ENCODE measurements at regions of chr2 and their contacts with region 1.

Region 1: GRCh38 chr2:55843096-55843993 is 80.2 kb downstream of the EFEMP1 start:
- DNase-seq: peak; percentile 92
- H3K4me3 ChIP-seq: no peak overlapping the region
- H3K27ac ChIP-seq: no peak overlapping the region
- H3K4me1 ChIP-seq: peaks cover 28% of the 10 kb centered on the region
- H3K27me3 ChIP-seq: no peaks in the 10 kb centered on the region
- CTCF ChIP-seq: no peak

Region 2: DNA sequence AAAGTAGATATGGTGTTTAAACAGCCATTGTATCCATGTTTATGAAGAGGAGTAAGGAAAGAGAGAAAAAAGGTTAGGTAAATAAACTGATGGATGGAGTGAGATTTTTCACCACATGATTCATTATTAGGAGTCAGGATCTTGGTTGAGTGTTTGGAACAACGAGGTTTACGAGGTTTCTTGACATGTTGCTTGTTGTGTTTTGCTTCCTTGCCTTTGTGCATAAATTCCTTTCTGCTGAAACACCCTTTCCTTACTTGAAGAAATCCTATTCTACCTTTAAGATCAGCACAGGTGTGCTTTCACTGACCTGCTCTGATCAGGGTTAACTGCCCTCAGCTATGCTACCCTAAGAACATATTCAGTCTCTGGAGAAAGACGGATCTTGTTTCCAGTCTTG is 13.6 kb after region 1 on chr2:
- CTCF ChIA-PET with region 1: no interaction called
- dilution Hi-C with region 1: no loop called
- in situ Hi-C with region 1: no loop called
- intact Hi-C with region 1: loop called (anchors 1 kb)
- DNase-seq: peak; percentile 97
- H3K4me3 ChIP-seq: no peak overlapping the region
- H3K27ac ChIP-seq: peak overlapping the region; percentile 66
- H3K4me1 ChIP-seq: peaks cover 38% of the 10 kb centered on the region
- H3K27me3 ChIP-seq: no peaks in the 10 kb centered on the region
- CTCF ChIP-seq: no peak

Region 3: DNA sequence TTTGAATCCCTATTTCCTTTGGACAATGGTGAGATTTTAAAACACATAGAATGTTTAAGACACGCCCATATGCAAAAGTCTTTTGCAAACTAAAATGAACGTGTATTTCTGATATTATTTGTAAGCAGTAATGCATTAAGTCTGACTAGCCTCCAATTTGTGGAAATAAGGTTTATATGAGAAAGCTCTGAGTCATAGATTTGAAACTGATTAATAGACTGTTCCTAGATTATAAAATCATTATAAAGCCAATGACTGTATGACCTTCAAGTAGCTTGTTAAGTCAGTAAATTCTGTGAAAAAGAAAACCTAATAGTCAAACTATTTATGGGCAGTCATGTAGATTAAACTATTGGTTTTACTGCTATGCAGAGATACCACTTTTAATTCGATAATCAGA is 93.0 kb after region 1 on chr2:
- CTCF ChIA-PET with region 1: no interaction called
- dilution Hi-C with region 1: no loop called
- in situ Hi-C with region 1: no loop called
- intact Hi-C with region 1: no loop called
- DNase-seq: no peak
- H3K4me3 ChIP-seq: no peak overlapping the region
- H3K27ac ChIP-seq: no peak overlapping the region
- H3K4me1 ChIP-seq: no peaks in the 10 kb centered on the region
- H3K27me3 ChIP-seq: no peaks in the 10 kb centered on the region
- CTCF ChIP-seq: no peak

Region 4: GRCh38 chr2:55954306-55955035 is 111.1 kb after region 1 on chr2:
- CTCF ChIA-PET with region 1: no interaction called
- dilution Hi-C with region 1: no loop called
- in situ Hi-C with region 1: no loop called
- intact Hi-C with region 1: loop called (anchors 5 kb)
- DNase-seq: no peak
- H3K4me3 ChIP-seq: no peak overlapping the region
- H3K27ac ChIP-seq: no peak overlapping the region
- H3K4me1 ChIP-seq: peaks cover 20% of the 10 kb centered on the region
- H3K27me3 ChIP-seq: no peaks in the 10 kb centered on the region
- CTCF ChIP-seq: no peak

Measured in mammary epithelial cell (primary cell).